Caco-2 (cell line): ENCODE measurements at regions of chr12 and their contacts with region 1.

Region 1: GRCh38 chr12:65895759-65896656 is 71.7 kb downstream of the HMGA2 start:
- DNase-seq: peak; percentile 64 to 80
- H3K4me3 ChIP-seq: peak overlapping the region; percentile 16; the same call in 1 of the 2 replicates
- H3K4me3 Mint-ChIP-seq: peak overlapping the region; percentile 69
- H3K27ac Mint-ChIP-seq: peak overlapping the region; percentile 85
- H3K4me1 ChIP-seq: peaks cover 64% of the 10 kb centered on the region
- H3K4me1 Mint-ChIP-seq: peaks cover 68% of the 10 kb centered on the region
- H3K27me3 ChIP-seq: no peaks in the 10 kb centered on the region
- H3K27me3 Mint-ChIP-seq: no peaks in the 10 kb centered on the region
- CTCF ChIP-seq: no peak

Region 2: DNA sequence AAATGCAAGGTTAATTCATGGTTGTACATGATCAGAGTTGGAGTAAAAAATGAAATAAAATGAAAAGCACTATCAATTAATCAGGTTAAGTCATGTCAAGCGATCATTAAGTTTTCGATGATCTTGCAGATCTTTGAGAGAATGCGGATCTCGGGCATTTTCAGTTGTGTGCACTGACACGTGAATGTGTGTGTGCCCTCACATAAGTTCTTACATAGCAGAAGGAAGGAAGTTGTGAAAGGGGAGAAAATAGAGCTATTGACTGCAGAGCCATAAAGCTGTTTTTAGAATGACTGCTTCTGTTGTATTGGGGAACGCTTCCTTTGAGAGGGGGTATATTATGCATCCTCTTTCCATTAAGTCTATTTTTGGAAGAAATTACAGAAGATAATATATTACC is 29.6 kb after region 1 on chr12:
- CTCF ChIA-PET with region 1: no interaction called
- POLR2A ChIA-PET with region 1: no interaction called
- intact Hi-C with region 1: loop called (anchors 2 kb)
- DNase-seq: no peak
- H3K4me3 ChIP-seq: no peak overlapping the region
- H3K4me3 Mint-ChIP-seq: peak overlapping the region; percentile 64
- H3K27ac Mint-ChIP-seq: peak overlapping the region; percentile 49
- H3K4me1 ChIP-seq: peaks cover 43% of the 10 kb centered on the region
- H3K4me1 Mint-ChIP-seq: peaks cover 36% of the 10 kb centered on the region
- H3K27me3 ChIP-seq: no peaks in the 10 kb centered on the region
- H3K27me3 Mint-ChIP-seq: no peaks in the 10 kb centered on the region
- CTCF ChIP-seq: no peak